MCF 10A (cell line): ENCODE measurements at regions of chr15 and their contacts with region 1.

Region 1: DNA sequence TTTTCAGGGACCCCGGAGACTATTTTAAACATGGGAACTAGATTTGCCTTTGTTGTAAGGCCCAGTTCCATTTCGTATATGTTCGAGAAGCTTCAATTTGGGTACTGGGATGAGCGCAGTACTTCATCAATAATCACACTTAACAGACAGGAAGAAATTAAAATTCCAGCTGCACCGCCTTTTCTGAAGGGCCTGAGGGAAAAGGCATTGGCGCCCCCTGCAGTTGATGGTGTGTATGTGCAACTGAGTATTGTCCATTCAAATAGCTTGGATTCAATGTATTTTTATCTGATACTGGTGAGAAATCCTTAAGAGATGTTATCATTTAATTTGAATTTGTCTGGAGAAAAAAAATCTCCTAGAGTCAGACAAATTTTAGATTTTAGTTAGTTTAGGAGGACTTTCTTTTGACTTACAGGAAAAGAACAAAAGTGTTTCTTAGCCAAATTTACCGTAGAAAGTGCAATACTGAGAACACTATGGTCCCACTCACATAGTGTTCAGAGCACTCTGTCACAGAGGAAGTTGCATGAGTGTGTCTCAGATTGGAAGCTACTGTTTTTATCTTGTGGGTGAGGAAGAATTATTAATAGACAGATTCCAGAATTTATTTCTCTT is 5.4 kb upstream of the ALDH1A2 start:
- DNase-seq: peak; percentile 79
- H3K4me3 Mint-ChIP-seq: no peak overlapping the region
- H3K27ac Mint-ChIP-seq: no peak overlapping the region
- H3K4me1 Mint-ChIP-seq: peaks cover 5% of the 10 kb centered on the region
- H3K27me3 Mint-ChIP-seq: no peaks in the 10 kb centered on the region
- CTCF ChIP-seq: peak; percentile 93

Region 2: GRCh38 chr15:57561041-57561711 is 509.7 kb before region 1 on chr15:
- CTCF ChIA-PET with region 1: interaction called, 6 read pairs
- POLR2A ChIA-PET with region 1: no interaction called
- intact Hi-C with region 1: loop called (anchors 1 kb)
- DNase-seq: peak; percentile 87
- H3K4me3 Mint-ChIP-seq: no peak overlapping the region
- H3K27ac Mint-ChIP-seq: no peak overlapping the region
- H3K4me1 Mint-ChIP-seq: peaks cover 18% of the 10 kb centered on the region
- H3K27me3 Mint-ChIP-seq: no peaks in the 10 kb centered on the region
- CTCF ChIP-seq: peak; percentile 86

Region 3: GRCh38 chr15:57732526-57733331 is 338.2 kb before region 1 on chr15:
- CTCF ChIA-PET with region 1: interaction called, 36 read pairs
- POLR2A ChIA-PET with region 1: interaction called, 4 read pairs
- intact Hi-C with region 1: no loop called
- DNase-seq: peak; percentile 71
- H3K4me3 Mint-ChIP-seq: no peak overlapping the region
- H3K27ac Mint-ChIP-seq: no peak overlapping the region
- H3K4me1 Mint-ChIP-seq: peaks cover 6% of the 10 kb centered on the region
- H3K27me3 Mint-ChIP-seq: no peaks in the 10 kb centered on the region
- CTCF ChIP-seq: peak; percentile 80

Region 4: GRCh38 chr15:57866149-57866736 is 204.7 kb before region 1 on chr15:
- CTCF ChIA-PET with region 1: interaction called, 340 read pairs
- POLR2A ChIA-PET with region 1: interaction called, 6 read pairs
- intact Hi-C with region 1: loop called (anchors 1 kb)
- DNase-seq: peak; percentile 74
- H3K4me3 Mint-ChIP-seq: no peak overlapping the region
- H3K27ac Mint-ChIP-seq: no peak overlapping the region
- H3K4me1 Mint-ChIP-seq: peaks cover 7% of the 10 kb centered on the region
- H3K27me3 Mint-ChIP-seq: no peaks in the 10 kb centered on the region
- CTCF ChIP-seq: peak; percentile 80

Region 5: GRCh38 chr15:57969354-57969753 is 101.6 kb before region 1 on chr15:
- CTCF ChIA-PET with region 1: interaction called, 19 read pairs
- POLR2A ChIA-PET with region 1: no interaction called
- intact Hi-C with region 1: loop called (anchors 1 kb)
- DNase-seq: peak; percentile 49
- H3K4me3 Mint-ChIP-seq: no peak overlapping the region
- H3K27ac Mint-ChIP-seq: no peak overlapping the region
- H3K4me1 Mint-ChIP-seq: no peaks in the 10 kb centered on the region
- H3K27me3 Mint-ChIP-seq: no peaks in the 10 kb centered on the region
- CTCF ChIP-seq: peak; percentile 19

Region 6: GRCh38 chr15:58086491-58086890 is 15.6 kb after region 1 on chr15:
- CTCF ChIA-PET with region 1: interaction called, 10 read pairs
- POLR2A ChIA-PET with region 1: no interaction called
- intact Hi-C with region 1: no loop called
- DNase-seq: no peak
- H3K4me3 Mint-ChIP-seq: no peak overlapping the region
- H3K27ac Mint-ChIP-seq: no peak overlapping the region
- H3K4me1 Mint-ChIP-seq: peaks cover 5% of the 10 kb centered on the region
- H3K27me3 Mint-ChIP-seq: peaks cover 11% of the 10 kb centered on the region
- CTCF ChIP-seq: no peak